Natural killer cell (primary cell): ENCODE measurements at regions of chr1 and their contacts with region 1.

Region 1: GRCh38 chr1:10494754-10495474 is 20.2 kb downstream of the PEX14 start:
- DNase-seq: peak; percentile 79 to 86
- ATAC-seq: peak; percentile 77 to 88 (median 84)
- H3K4me3 ChIP-seq: peak overlapping the region; percentile 46
- H3K4me3 Mint-ChIP-seq: peak overlapping the region; percentile 94
- H3K27ac ChIP-seq: peak overlapping the region; percentile 77
- H3K27ac Mint-ChIP-seq: peak overlapping the region; percentile 92 to 96
- H3K4me1 ChIP-seq: peaks cover 37% of the 10 kb centered on the region
- H3K4me1 Mint-ChIP-seq: peaks cover 36 to 44% of the 10 kb centered on the region in 2 donors
- H3K27me3 ChIP-seq: no peaks in the 10 kb centered on the region
- H3K27me3 Mint-ChIP-seq: no peaks in the 10 kb centered on the region
- CTCF ChIP-seq: peak; percentile 98

Region 2: GRCh38 chr1:9629445-9630201 is 865.3 kb before region 1 on chr1:
- intact Hi-C with region 1: no loop called
- DNase-seq: peak; percentile 67 to 88
- ATAC-seq: peak; percentile 40 to 72 (median 46)
- H3K4me3 ChIP-seq: peak overlapping the region; percentile 70
- H3K4me3 Mint-ChIP-seq: peak overlapping the region; percentile 91
- H3K27ac ChIP-seq: peak overlapping the region; percentile 85
- H3K27ac Mint-ChIP-seq: peak overlapping the region; percentile 87 to 99
- H3K4me1 ChIP-seq: peaks cover 65% of the 10 kb centered on the region
- H3K4me1 Mint-ChIP-seq: peaks cover 55 to 60% of the 10 kb centered on the region in 2 donors
- H3K27me3 ChIP-seq: no peaks in the 10 kb centered on the region
- H3K27me3 Mint-ChIP-seq: no peaks in the 10 kb centered on the region
- CTCF ChIP-seq: no peak

Region 3: DNA sequence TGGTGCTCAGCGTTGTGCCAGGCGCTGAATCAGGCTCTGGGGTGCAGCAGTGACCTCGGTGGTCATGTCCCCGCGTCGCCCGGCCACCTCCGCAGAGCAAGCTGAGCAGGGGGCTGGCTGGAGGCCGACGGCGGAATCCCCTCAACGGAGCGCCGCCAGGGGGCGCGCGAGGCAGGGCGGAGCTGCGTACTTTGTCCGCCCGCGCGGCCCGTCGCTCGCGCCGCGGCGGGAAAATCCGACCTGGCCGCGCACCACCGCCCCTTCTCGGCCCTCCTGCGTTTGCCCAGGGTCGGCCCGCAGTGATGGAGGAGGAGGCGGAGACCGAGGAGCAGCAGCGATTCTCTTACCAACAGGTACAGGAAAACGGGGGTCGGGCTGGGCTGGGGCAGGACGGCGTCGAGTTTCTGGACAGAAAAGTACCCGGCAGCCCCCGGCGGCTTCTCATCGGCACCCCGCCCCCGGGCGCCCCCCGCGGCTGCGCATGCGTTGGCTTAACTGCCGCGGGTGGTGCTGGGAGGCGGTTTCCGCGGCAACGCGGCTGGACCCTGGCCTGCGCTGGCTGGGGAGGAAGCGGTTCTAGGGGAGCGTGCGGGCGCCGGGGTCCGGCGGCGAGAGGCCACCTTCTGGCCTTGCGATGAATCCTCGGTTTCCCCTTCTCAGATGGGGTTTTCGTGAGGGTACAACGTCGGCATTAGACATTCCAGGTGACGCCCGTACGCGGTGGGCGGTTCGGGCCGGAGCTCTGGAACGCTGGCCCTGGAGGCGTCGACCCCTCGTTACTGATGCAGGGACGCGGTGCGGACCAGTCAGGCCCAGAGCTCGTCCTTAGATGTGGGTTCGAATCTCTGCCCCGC is 64.5 kb before region 1 on chr1 and contains the start of gene CENPS:
- intact Hi-C with region 1: loop called (anchors 1 kb)
- DNase-seq: peak; percentile 90 to 95
- ATAC-seq: peak; percentile 82 to 94 (median 86)
- H3K4me3 ChIP-seq: peak within 1 kb of the TSS; percentile 84
- H3K4me3 Mint-ChIP-seq: peak within 1 kb of the TSS; percentile 92
- H3K27ac ChIP-seq: peak within 1 kb of the TSS; percentile 85
- H3K27ac Mint-ChIP-seq: peak within 1 kb of the TSS; percentile 89 to 97
- H3K4me1 ChIP-seq: peaks cover 18% of the 10 kb centered on the region
- H3K4me1 Mint-ChIP-seq: peaks cover 17% of the 10 kb centered on the region in 2 donors
- H3K27me3 ChIP-seq: no peaks in the 10 kb centered on the region
- H3K27me3 Mint-ChIP-seq: no peaks in the 10 kb centered on the region
- CTCF ChIP-seq: peak; percentile 91
- total RNA-seq, gene CENPS: 4.1 to 5.0 (median 4.5) TPM

Region 4: GRCh38 chr1:10507111-10507879 is 12.4 kb after region 1 on chr1:
- intact Hi-C with region 1: loop called (anchors 2 kb)
- DNase-seq: peak; percentile 44 to 74
- ATAC-seq: peak; percentile 48 to 73 (median 58)
- H3K4me3 ChIP-seq: no peak overlapping the region
- H3K4me3 Mint-ChIP-seq: no peak overlapping the region
- H3K27ac ChIP-seq: no peak overlapping the region
- H3K27ac Mint-ChIP-seq: peak overlapping the region; percentile 68 to 73
- H3K4me1 ChIP-seq: peaks cover 24% of the 10 kb centered on the region
- H3K4me1 Mint-ChIP-seq: peaks cover 42% of the 10 kb centered on the region in 2 donors
- H3K27me3 ChIP-seq: no peaks in the 10 kb centered on the region
- H3K27me3 Mint-ChIP-seq: no peaks in the 10 kb centered on the region
- CTCF ChIP-seq: peak; percentile 89

Region 5: DNA sequence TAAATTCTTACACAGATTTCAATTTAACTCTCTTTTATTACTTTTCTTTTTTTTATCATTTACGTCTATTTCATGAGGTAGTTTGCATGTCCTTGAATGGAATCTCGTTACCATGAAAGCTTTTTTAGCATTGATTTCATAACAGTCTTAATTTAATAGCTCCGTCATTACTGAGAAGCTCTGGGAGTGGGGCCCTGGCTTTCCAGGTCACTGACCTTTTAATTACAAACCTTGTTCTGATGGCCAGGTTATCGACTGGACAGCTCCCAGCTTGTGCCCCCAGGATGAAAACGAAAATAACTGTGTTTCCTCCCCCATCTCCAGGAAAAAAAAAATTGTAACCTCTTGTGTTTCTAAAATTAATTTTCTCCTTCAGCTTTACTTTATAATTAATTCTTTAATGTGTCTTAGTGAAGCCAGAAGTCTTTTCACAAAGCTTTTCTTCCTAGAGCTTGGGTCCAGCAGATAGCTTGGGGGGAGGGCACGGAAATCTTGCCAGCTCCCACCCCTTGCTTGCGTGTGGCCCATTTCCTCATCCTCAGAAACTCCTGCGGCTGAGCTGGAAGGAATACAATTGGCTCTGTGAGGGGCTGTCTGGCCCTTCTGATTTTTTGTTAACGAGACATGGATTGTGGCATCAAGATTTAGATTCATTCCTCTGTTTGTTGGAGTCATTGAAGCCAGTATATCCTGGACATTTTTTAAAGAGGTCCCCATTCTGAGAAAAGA is 45.5 kb after region 1 on chr1:
- intact Hi-C with region 1: no loop called
- DNase-seq: no peak
- ATAC-seq: no peak
- H3K4me3 ChIP-seq: no peak overlapping the region
- H3K4me3 Mint-ChIP-seq: no peak overlapping the region
- H3K27ac ChIP-seq: no peak overlapping the region
- H3K27ac Mint-ChIP-seq: peak overlapping the region in 1 of 2 donors; percentile 48
- H3K4me1 ChIP-seq: no peaks in the 10 kb centered on the region
- H3K4me1 Mint-ChIP-seq: peaks cover 24 to 28% of the 10 kb centered on the region in 2 donors
- H3K27me3 ChIP-seq: no peaks in the 10 kb centered on the region
- H3K27me3 Mint-ChIP-seq: no peaks in the 10 kb centered on the region
- CTCF ChIP-seq: no peak

Region 6: GRCh38 chr1:10564063-10564462 is 69.1 kb after region 1 on chr1:
- intact Hi-C with region 1: no loop called
- DNase-seq: no peak
- ATAC-seq: no peak
- H3K4me3 ChIP-seq: no peak overlapping the region
- H3K4me3 Mint-ChIP-seq: no peak overlapping the region
- H3K27ac ChIP-seq: no peak overlapping the region
- H3K27ac Mint-ChIP-seq: no peak overlapping the region
- H3K4me1 ChIP-seq: no peaks in the 10 kb centered on the region
- H3K4me1 Mint-ChIP-seq: peaks cover 6 to 12% of the 10 kb centered on the region in 2 donors
- H3K27me3 ChIP-seq: no peaks in the 10 kb centered on the region
- H3K27me3 Mint-ChIP-seq: no peaks in the 10 kb centered on the region
- CTCF ChIP-seq: no peak

Region 7: GRCh38 chr1:10694633-10695627 is 200.0 kb after region 1 on chr1:
- intact Hi-C with region 1: loop called (anchors 1 kb)
- DNase-seq: peak; percentile 80 to 90
- ATAC-seq: peak; percentile 60 to 85 (median 68)
- H3K4me3 ChIP-seq: peak overlapping the region; percentile 15
- H3K4me3 Mint-ChIP-seq: peak overlapping the region; percentile 86
- H3K27ac ChIP-seq: peak overlapping the region; percentile 45
- H3K27ac Mint-ChIP-seq: peak overlapping the region; percentile 82 to 92
- H3K4me1 ChIP-seq: peaks cover 26% of the 10 kb centered on the region
- H3K4me1 Mint-ChIP-seq: peaks cover 16 to 39% of the 10 kb centered on the region in 2 donors
- H3K27me3 ChIP-seq: no peaks in the 10 kb centered on the region
- H3K27me3 Mint-ChIP-seq: no peaks in the 10 kb centered on the region
- CTCF ChIP-seq: no peak

Region 8: GRCh38 chr1:10909697-10910671 is 415.1 kb after region 1 on chr1:
- intact Hi-C with region 1: loop called (anchors 1 kb)
- DNase-seq: peak; percentile 79 to 83
- ATAC-seq: peak; percentile 79 to 94 (median 91)
- H3K4me3 ChIP-seq: no peak overlapping the region
- H3K4me3 Mint-ChIP-seq: no peak overlapping the region
- H3K27ac ChIP-seq: no peak overlapping the region
- H3K27ac Mint-ChIP-seq: no peak overlapping the region
- H3K4me1 ChIP-seq: peaks cover 39% of the 10 kb centered on the region
- H3K4me1 Mint-ChIP-seq: peaks cover 3 to 24% of the 10 kb centered on the region in 2 donors
- H3K27me3 ChIP-seq: no peaks in the 10 kb centered on the region
- H3K27me3 Mint-ChIP-seq: no peaks in the 10 kb centered on the region
- CTCF ChIP-seq: peak; percentile 73